K562 (cell line): ENCODE measurements at regions of chr9 and their contacts with region 1.

Region 1: DNA sequence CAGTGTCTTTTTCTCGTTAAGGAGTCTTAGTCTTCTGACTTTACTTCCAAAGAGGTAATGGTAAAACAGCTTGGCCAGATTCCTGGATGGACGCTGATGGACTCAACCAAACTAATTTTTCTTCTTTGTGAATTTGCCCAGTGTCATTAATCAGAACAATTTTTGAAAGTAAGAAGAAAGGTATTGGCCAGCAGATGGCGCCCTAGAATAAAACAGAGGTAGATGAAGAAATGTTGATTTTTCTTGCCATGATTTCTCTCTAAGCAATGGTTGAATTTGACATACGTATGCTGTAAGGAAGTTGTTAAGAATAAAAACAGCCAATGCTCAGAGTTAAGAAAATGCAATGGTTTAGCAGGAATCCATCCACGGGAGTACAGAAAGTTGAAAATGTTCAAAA is 500.0 kb downstream of the DIRAS2 start:
- DNase-seq: peak; percentile 5 to 47 (median 6)
- ATAC-seq: no peak
- H3K4me3 ChIP-seq: no peak overlapping the region
- H3K27ac ChIP-seq: no peak overlapping the region
- H3K4me1 ChIP-seq: no peaks in the 10 kb centered on the region
- H3K27me3 ChIP-seq: peaks cover 0 to 5% of the 10 kb centered on the region in 2 experiments; a peak in 1 of 5 replicates
- CTCF ChIP-seq: peak; percentile 17 to 55 (median 34); a peak in 4 of 6 replicates
- EP300 ChIP-seq: no peak
- POLR2A ChIP-seq: no peak
- RAD21 ChIP-seq: peak in 1 of 2 experiments; percentile 49; a peak in 3 of 4 replicates

Region 2: GRCh38 chr9:89732295-89732938 is 410.2 kb before region 1 on chr9:
- CTCF ChIA-PET with region 1: no interaction called
- POLR2A ChIA-PET with region 1: no interaction called
- in situ Hi-C with region 1: no loop called
- intact Hi-C with region 1: no loop called
- DNase-seq: no peak
- ATAC-seq: no peak
- H3K4me3 ChIP-seq: no peak overlapping the region
- H3K27ac ChIP-seq: no peak overlapping the region
- H3K4me1 ChIP-seq: no peaks in the 10 kb centered on the region
- H3K27me3 ChIP-seq: peaks cover 0 to 4% of the 10 kb centered on the region in 2 experiments; a peak in 2 of 5 replicates
- CTCF ChIP-seq: no peak
- EP300 ChIP-seq: no peak
- POLR2A ChIP-seq: no peak
- RAD21 ChIP-seq: no peak

Region 3: GRCh38 chr9:90773617-90774016 is 631.0 kb after region 1 on chr9:
- CTCF ChIA-PET with region 1: no interaction called
- POLR2A ChIA-PET with region 1: no interaction called
- in situ Hi-C with region 1: loop called (anchors 25 kb)
- intact Hi-C with region 1: no loop called
- DNase-seq: peak in 3 of 4 experiments; percentile 9 to 17 (median 9)
- ATAC-seq: peak; percentile 71
- H3K4me3 ChIP-seq: no peak overlapping the region
- H3K27ac ChIP-seq: no peak overlapping the region
- H3K4me1 ChIP-seq: no peaks in the 10 kb centered on the region
- H3K27me3 ChIP-seq: no peaks in the 10 kb centered on the region
- CTCF ChIP-seq: peak; percentile 36 to 50 (median 45)
- EP300 ChIP-seq: no peak
- POLR2A ChIP-seq: no peak
- RAD21 ChIP-seq: peak; percentile 20 to 50; a peak in 2 of 4 replicates

Region 4: DNA sequence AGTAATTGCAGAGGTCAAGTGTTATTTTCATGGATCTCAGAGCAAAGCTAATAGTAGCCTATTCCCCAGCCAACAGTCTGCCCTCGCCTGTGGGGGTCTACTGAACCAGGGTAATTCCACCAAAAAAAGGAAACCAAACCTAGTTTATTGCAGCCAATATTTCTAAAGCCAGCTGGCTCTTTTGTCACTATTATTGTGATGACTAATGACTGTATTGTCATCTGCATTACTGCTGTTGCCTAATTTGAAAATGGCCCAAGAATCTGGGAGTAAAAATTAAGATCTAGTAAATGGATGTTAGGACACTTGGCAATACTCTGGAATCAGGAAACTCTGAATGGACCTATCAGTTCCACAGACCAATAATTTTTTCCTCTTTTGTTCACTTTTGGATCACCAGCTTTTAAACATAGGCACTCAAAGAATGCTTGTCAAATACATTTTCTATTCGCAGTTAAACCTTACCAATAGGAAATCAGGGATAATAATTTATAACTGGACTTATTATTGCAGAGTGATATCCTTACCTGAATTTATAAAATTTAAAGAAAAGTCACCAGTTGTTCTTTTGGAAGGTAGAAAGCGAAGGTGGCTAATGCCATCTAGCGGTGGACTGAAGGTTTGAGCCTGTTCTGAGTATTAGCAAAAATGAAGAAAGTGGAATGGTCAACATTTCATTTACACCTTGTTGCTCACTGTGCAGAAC is 728.2 kb after region 1 on chr9:
- CTCF ChIA-PET with region 1: interaction called, 14 read pairs
- POLR2A ChIA-PET with region 1: no interaction called
- in situ Hi-C with region 1: no loop called
- intact Hi-C with region 1: no loop called
- DNase-seq: peak; percentile 14 to 54 (median 20)
- ATAC-seq: peak; percentile 69
- H3K4me3 ChIP-seq: no peak overlapping the region
- H3K27ac ChIP-seq: no peak overlapping the region
- H3K4me1 ChIP-seq: no peaks in the 10 kb centered on the region; a peak in 1 of 5 replicates
- H3K27me3 ChIP-seq: no peaks in the 10 kb centered on the region
- CTCF ChIP-seq: peak; percentile 51 to 74 (median 62)
- EP300 ChIP-seq: no peak
- POLR2A ChIP-seq: no peak
- RAD21 ChIP-seq: peak; percentile 73 to 74